T-cell (primary cell): ENCODE measurements at regions of chr3 and their contacts with region 1.

Region 1: DNA sequence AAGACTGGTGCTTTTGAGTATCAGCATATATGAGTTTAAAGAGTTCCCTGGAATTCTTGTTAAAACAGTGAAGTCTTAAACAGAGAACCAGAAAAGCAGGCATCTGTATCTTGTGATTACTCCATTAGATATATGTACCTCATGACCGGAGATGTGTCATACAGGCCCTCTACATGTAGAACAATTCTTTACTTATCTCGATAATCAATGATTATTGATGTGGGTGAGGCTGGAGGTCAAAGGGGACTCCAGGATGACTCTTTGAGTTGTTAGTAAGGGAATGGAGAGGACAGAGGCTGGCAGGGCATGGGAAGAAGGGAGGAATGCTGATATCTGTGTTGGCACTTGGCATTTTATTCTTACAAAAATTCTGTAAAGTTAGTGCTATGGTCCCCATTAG is 155.7 kb downstream of the GAP43 start:
- DNase-seq: no peak
- ATAC-seq: no peak
- H3K4me3 ChIP-seq: no peak overlapping the region
- H3K4me3 Mint-ChIP-seq: no peak overlapping the region
- H3K27ac ChIP-seq: no peak overlapping the region
- H3K27ac Mint-ChIP-seq: no peak overlapping the region
- H3K4me1 ChIP-seq: peaks cover 2 to 7% of the 10 kb centered on the region in 2 experiments
- H3K4me1 Mint-ChIP-seq: peaks cover 0 to 2% (median 2%) of the 10 kb centered on the region in 3 donors
- H3K27me3 ChIP-seq: no peaks in the 10 kb centered on the region
- H3K27me3 Mint-ChIP-seq: peaks cover 5% of the 10 kb centered on the region in 2 donors

Region 2: DNA sequence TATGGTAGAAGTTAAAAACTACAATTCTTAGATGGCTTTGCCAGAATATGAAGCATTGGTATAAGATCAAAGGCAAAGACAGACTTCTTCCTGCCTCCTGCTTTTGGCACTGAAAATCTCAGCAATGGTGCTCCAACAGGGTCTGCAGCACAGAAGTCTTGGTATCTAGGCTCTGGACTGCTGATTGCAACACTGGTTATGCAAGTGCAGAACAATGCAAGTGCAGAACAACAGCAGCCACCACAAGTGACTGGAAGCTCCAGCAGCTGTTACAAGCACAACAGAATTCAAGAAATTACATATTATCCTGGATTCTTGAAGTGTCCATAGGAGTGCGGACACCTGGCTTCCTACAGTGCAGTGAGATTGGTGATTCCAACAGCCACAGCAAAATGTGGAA is 665.6 kb before region 1 on chr3:
- CTCF ChIA-PET with region 1: interaction called in 1 of 2 experiments, 10 read pairs
- POLR2A ChIA-PET with region 1: no interaction called
- DNase-seq: no peak
- ATAC-seq: no peak
- H3K4me3 ChIP-seq: no peak overlapping the region
- H3K4me3 Mint-ChIP-seq: no peak overlapping the region
- H3K27ac ChIP-seq: no peak overlapping the region
- H3K27ac Mint-ChIP-seq: no peak overlapping the region
- H3K4me1 ChIP-seq: no peaks in the 10 kb centered on the region
- H3K4me1 Mint-ChIP-seq: peaks cover 21 to 29% (median 23%) of the 10 kb centered on the region in 3 donors
- H3K27me3 ChIP-seq: no peaks in the 10 kb centered on the region
- H3K27me3 Mint-ChIP-seq: no peaks in the 10 kb centered on the region

Region 3: DNA sequence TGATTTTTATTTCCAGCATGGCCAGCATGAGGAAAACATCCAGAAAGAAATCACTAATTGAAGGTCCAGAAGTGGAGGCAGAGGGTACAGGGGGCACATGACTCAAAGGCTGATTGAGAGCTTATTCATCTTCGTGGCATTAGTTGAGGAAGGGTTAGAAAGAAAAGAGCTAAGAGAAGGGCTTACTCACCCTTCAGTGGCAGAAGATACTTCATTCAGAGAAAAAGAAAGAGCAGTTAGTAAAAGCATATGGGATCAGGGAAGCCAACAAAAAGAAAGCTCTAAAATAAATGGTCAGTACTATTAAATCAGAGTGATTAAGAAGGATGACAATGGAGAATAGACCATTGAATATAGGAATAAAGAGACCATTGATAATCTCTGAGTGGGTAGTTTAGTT is 130.5 kb before region 1 on chr3:
- CTCF ChIA-PET with region 1: no interaction called
- POLR2A ChIA-PET with region 1: no interaction called
- DNase-seq: no peak
- ATAC-seq: no peak
- H3K4me3 ChIP-seq: no peak overlapping the region
- H3K4me3 Mint-ChIP-seq: no peak overlapping the region
- H3K27ac ChIP-seq: no peak overlapping the region
- H3K27ac Mint-ChIP-seq: no peak overlapping the region
- H3K4me1 ChIP-seq: no peaks in the 10 kb centered on the region
- H3K4me1 Mint-ChIP-seq: no peaks in the 10 kb centered on the region
- H3K27me3 ChIP-seq: no peaks in the 10 kb centered on the region
- H3K27me3 Mint-ChIP-seq: peaks cover 28 to 37% of the 10 kb centered on the region in 2 donors

Region 4: GRCh38 chr3:116552246-116552645 is 773.2 kb after region 1 on chr3:
- CTCF ChIA-PET with region 1: no interaction called
- POLR2A ChIA-PET with region 1: no interaction called
- DNase-seq: no peak
- ATAC-seq: no peak
- H3K4me3 ChIP-seq: no peak overlapping the region
- H3K4me3 Mint-ChIP-seq: no peak overlapping the region
- H3K27ac ChIP-seq: no peak overlapping the region
- H3K27ac Mint-ChIP-seq: no peak overlapping the region
- H3K4me1 ChIP-seq: no peaks in the 10 kb centered on the region
- H3K4me1 Mint-ChIP-seq: no peaks in the 10 kb centered on the region
- H3K27me3 ChIP-seq: no peaks in the 10 kb centered on the region
- H3K27me3 Mint-ChIP-seq: no peaks in the 10 kb centered on the region